ENCODE measurements at regions of chr2 and their contacts with region 1.

Region 1: GRCh38 chr2:240998120-240998994 is at the start of gene SNED1:
- DNase-seq: peak; percentile 93 to 94
- H3K4me3 ChIP-seq: peak within 1 kb of the TSS; percentile 40 to 83 (median 75)
- H3K27ac ChIP-seq: peak within 1 kb of the TSS; percentile 94 to 99 (median 98)
- H3K4me1 ChIP-seq: peaks cover 77 to 88% of the 10 kb centered on the region in 2 donors
- H3K27me3 ChIP-seq: no peaks in the 10 kb centered on the region
- CTCF ChIP-seq: peak in 1 of 6 experiments; percentile 1
- POLR2A ChIP-seq: peak in 1 of 2 donors; percentile 94
- total RNA-seq, gene SNED1: 47.7 to 122 (median 68.7) TPM

Region 2: GRCh38 chr2:240452457-240453256 is 545.7 kb before region 1 on chr2:
- intact Hi-C with region 1: no loop called
- DNase-seq: peak; percentile 73
- H3K4me3 ChIP-seq: peak overlapping the region in 1 of 3 donors; percentile 37
- H3K27ac ChIP-seq: no peak overlapping the region
- H3K4me1 ChIP-seq: peaks cover 9 to 32% of the 10 kb centered on the region in 2 donors
- H3K27me3 ChIP-seq: no peaks in the 10 kb centered on the region
- CTCF ChIP-seq: no peak
- POLR2A ChIP-seq: peak in 1 of 2 donors; percentile 41

Region 3: GRCh38 chr2:240733803-240734495 is 264.4 kb before region 1 on chr2:
- intact Hi-C with region 1: no loop called
- DNase-seq: no peak
- H3K4me3 ChIP-seq: no peak overlapping the region
- H3K27ac ChIP-seq: no peak overlapping the region
- H3K4me1 ChIP-seq: no peaks in the 10 kb centered on the region
- H3K27me3 ChIP-seq: no peaks in the 10 kb centered on the region
- CTCF ChIP-seq: no peak
- POLR2A ChIP-seq: no peak

Region 4: DNA sequence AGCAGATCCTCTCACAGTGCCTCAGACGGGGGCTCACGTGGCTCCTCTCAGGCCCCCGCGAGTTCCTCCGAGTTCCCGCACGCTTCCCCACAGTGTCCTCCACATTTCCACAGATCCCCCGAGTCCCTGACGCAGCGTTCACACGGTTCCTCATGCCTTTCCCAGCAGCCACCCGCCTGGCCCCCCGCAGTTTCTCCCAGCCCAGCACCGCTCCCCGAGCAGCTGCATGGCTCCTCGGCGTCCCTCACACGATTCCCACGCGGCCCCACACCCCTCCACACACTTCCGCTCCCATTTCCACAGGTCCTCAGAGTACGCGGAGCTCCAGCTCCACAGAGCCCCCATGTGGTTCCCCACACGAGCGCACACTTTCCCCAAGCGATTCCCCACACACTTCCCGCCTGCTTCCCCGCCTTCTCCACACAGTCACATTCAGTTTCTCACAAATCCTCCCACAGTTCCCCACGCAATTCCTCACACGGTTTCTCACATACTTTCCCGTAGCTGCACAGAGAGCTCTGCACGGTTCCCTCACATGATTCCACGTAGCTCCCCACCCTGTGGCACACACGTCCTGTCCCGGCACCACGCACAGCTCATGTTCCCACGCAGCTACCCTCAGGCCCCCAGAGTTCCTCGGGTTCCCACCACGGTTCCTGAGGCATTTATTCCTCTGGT is 218.2 kb before region 1 on chr2:
- intact Hi-C with region 1: no loop called
- DNase-seq: no peak
- H3K4me3 ChIP-seq: no peak overlapping the region
- H3K27ac ChIP-seq: no peak overlapping the region
- H3K4me1 ChIP-seq: peaks cover 5 to 9% of the 10 kb centered on the region in 2 donors
- H3K27me3 ChIP-seq: no peaks in the 10 kb centered on the region
- CTCF ChIP-seq: no peak
- POLR2A ChIP-seq: no peak

Region 5: DNA sequence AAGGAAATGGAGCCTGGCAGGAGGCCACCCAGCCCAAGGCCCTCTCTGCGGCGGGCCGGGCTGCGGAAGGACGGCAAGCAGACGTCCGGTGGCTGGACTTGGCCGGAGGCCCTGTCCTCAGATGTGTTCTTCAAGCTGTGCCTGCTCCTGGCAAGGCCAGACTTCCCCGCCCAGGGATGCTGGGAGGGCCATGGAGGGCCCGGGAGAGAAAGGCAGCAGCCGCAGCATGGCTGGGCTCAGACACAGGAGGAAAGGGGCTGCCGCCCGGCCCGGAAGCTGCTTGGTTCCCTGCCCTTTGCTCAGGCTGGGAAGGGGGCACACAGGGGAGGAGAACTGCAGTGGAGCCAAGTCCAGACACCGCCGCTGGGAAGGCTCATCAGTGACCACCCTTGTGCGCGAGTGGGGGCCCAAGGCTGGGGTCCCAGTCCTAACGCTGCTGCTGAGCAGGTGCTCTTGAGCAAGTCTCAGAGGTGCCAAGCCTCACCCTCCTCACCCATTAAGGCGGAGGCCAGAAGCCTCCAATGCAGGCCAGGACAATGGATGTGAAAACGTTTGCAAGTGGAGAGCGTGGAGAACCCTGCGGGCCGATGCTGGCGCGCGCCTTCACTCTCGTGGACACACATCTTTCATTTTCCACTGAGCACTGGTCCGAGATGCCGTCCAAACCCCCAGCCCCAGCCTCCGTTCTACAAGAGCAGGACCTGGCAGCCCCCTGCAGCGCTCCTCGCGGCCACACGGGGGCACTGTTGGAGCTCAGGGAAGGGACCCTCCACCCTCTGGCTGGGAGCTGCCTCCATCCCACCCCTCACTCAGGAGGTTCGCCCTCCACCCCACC is 84.3 kb before region 1 on chr2:
- intact Hi-C with region 1: loop called (anchors 10 kb)
- DNase-seq: peak; percentile 59 to 61
- H3K4me3 ChIP-seq: no peak overlapping the region
- H3K27ac ChIP-seq: peak overlapping the region in 1 of 3 donors; percentile 15
- H3K4me1 ChIP-seq: peaks cover 0 to 43% of the 10 kb centered on the region in 2 donors
- H3K27me3 ChIP-seq: no peaks in the 10 kb centered on the region
- CTCF ChIP-seq: peak; percentile 70 to 96 (median 78)
- POLR2A ChIP-seq: no peak

Region 6: DNA sequence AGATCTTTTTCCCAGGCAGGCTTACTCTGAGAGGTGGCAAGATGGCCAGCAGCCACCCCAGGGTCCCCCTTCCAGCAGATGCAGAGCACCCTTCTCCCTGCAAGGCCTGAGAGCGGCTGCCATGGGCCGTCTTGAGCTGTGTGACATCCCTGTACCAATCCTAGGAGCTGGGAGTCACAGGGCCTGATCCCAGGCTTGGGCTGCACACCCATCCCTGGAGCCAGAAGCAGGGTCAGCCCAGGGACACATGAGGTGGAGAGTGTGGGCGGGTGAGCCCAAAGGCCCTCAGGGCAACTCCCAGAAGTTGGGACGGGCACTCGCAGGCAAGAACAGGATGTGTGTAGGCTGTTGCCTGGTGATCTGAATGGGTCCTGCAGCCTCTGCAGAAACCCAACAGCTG is 51.7 kb before region 1 on chr2:
- intact Hi-C with region 1: no loop called
- DNase-seq: no peak
- H3K4me3 ChIP-seq: no peak overlapping the region
- H3K27ac ChIP-seq: no peak overlapping the region
- H3K4me1 ChIP-seq: no peaks in the 10 kb centered on the region
- H3K27me3 ChIP-seq: no peaks in the 10 kb centered on the region
- CTCF ChIP-seq: no peak
- POLR2A ChIP-seq: no peak

Region 7: DNA sequence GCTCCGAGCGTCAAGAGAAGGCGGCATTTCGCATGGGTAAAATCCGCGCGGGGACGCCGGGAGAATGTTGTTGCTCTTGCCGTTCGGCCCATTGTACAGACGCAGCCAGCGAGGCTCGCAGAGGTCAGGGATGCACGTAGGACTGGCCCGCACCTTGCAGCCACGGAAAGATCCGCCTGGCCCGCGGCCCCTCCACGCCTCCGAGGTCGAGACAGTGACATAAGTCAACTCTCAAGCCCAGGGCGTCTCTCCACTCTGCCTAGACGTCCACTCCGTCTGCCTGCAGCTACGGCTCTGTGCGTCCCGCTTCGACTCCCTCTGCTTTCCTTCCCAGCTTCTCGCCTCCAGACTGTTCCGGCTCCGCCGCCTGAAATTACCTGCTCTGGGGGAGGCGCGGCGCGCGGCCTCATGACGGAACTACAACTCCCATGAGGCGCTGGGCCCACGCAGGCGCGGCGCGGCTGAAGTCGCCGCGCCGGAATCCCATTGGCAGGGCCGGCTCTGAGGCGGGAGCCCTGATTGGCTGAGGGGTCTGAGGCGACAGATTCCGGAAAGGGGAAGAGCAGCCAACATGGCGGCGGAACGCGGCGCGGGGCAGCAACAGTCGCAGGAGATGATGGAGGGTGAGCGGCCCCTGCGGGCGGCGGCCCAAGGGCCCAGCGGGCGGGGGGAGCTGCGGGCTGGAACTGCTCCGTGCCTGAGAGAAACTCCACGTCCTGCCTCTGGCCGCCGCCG is 151.7 kb after region 1 on chr2 and contains the start of gene PPP1R7:
- intact Hi-C with region 1: loop called (anchors 10 kb)
- DNase-seq: peak; percentile 97
- H3K4me3 ChIP-seq: peak within 1 kb of the TSS; percentile 6 to 94 (median 83)
- H3K27ac ChIP-seq: peak within 1 kb of the TSS in 2 of 3 donors; percentile 26 to 60
- H3K4me1 ChIP-seq: peaks cover 8 to 13% of the 10 kb centered on the region in 2 donors
- H3K27me3 ChIP-seq: no peaks in the 10 kb centered on the region
- CTCF ChIP-seq: peak in 2 of 6 experiments; percentile 4 to 18
- POLR2A ChIP-seq: peak in 1 of 2 donors; percentile 74
- total RNA-seq, gene PPP1R7: 58.7 to 74.0 (median 68.8) TPM